ENCODE measurements at regions of chr7 and their contacts with region 1.

Region 1: DNA sequence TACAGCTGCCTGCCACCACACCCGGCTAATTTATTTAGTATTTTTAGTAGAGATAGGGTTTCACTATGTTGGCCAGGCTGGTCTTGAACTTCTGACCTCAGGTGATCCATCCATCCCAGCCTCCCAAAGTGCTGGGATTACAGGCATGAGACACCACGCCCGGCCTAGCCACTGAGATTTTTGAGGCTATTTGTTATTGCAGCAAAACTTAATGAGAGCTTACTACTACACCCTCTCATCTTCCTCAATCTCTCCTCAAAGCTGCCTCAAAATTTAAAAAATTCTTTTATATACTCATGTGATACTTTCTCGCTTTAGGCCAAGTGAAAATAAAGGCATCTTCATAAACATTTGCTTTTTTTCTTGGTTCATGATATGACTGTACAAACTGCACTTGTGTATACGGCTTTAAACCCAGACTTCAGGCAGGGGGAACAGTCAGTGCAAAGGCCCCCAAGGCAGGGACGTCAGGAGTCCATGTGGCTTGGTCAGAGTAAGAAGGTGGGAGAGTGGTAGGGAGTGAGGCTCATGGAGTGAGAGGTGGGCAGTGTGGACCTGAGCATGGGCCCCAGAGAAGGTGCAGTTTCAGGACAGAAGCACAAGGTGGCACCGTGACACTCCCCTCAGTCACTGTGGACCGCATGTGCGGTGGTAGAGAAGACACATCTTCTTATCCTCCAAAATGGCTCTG is 55.5 kb downstream of the SYPL1 start:
- DNase-seq: peak; percentile 56 to 86 (median 63)
- ATAC-seq: peak; percentile 99
- H3K4me3 ChIP-seq: no peak overlapping the region
- H3K4me3 Mint-ChIP-seq: no peak overlapping the region
- H3K27ac ChIP-seq: no peak overlapping the region
- H3K27ac Mint-ChIP-seq: no peak overlapping the region
- H3K4me1 ChIP-seq: peaks cover 15% of the 10 kb centered on the region
- H3K4me1 Mint-ChIP-seq: peaks cover 22% of the 10 kb centered on the region
- H3K27me3 ChIP-seq: no peaks in the 10 kb centered on the region
- H3K27me3 Mint-ChIP-seq: no peaks in the 10 kb centered on the region
- CTCF ChIP-seq: peak; percentile 86

Region 2: GRCh38 chr7:106071356-106071998 is 14.8 kb after region 1 on chr7:
- CTCF ChIA-PET with region 1: interaction called, 4 read pairs
- POLR2A ChIA-PET with region 1: interaction called, 15 read pairs
- intact Hi-C with region 1: no loop called
- DNase-seq: peak in 13 of 14 experiments; percentile 11 to 83 (median 34)
- ATAC-seq: peak; percentile 95
- H3K4me3 ChIP-seq: peak overlapping the region; percentile 44
- H3K4me3 Mint-ChIP-seq: peak overlapping the region; percentile 54
- H3K27ac ChIP-seq: peak overlapping the region; percentile 79 to 86
- H3K27ac Mint-ChIP-seq: peak overlapping the region; percentile 95
- H3K4me1 ChIP-seq: peaks cover 44% of the 10 kb centered on the region
- H3K4me1 Mint-ChIP-seq: peaks cover 63% of the 10 kb centered on the region
- H3K27me3 ChIP-seq: no peaks in the 10 kb centered on the region
- H3K27me3 Mint-ChIP-seq: no peaks in the 10 kb centered on the region
- CTCF ChIP-seq: no peak

Region 3: DNA sequence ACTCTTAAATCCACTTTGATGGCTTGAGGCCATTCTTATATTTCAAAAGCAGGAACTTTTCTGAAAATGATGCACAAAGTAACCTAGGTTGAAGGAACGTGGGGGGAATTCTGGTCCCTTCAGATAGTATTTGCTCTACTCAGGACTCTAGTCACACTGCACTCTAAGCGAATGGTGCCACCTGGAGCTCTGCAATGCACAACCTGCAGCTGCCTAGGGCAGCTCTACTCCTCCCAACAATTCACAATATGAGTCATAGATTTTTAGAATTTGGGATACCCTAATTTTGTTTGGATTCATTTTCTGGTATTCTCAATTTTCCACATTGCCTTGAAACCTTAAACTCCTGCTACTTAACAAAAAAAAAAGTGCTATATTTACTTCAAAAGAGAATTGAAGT is 38.1 kb after region 1 on chr7:
- CTCF ChIA-PET with region 1: no interaction called
- POLR2A ChIA-PET with region 1: no interaction called
- intact Hi-C with region 1: loop called in 1 of 2 experiments (anchors 2 kb)
- DNase-seq: no peak
- ATAC-seq: no peak
- H3K4me3 ChIP-seq: no peak overlapping the region
- H3K4me3 Mint-ChIP-seq: no peak overlapping the region
- H3K27ac ChIP-seq: no peak overlapping the region
- H3K27ac Mint-ChIP-seq: peak overlapping the region; percentile 20
- H3K4me1 ChIP-seq: no peaks in the 10 kb centered on the region
- H3K4me1 Mint-ChIP-seq: peaks cover 10% of the 10 kb centered on the region
- H3K27me3 ChIP-seq: no peaks in the 10 kb centered on the region
- H3K27me3 Mint-ChIP-seq: no peaks in the 10 kb centered on the region
- CTCF ChIP-seq: no peak

Region 4: GRCh38 chr7:106153891-106154449 is 97.3 kb after region 1 on chr7:
- CTCF ChIA-PET with region 1: interaction called, 52 read pairs
- POLR2A ChIA-PET with region 1: interaction called, 13 read pairs
- intact Hi-C with region 1: loop called (anchors 1 kb)
- DNase-seq: peak; percentile 62 to 85 (median 69)
- ATAC-seq: peak; percentile 98
- H3K4me3 ChIP-seq: no peak overlapping the region
- H3K4me3 Mint-ChIP-seq: no peak overlapping the region
- H3K27ac ChIP-seq: no peak overlapping the region
- H3K27ac Mint-ChIP-seq: no peak overlapping the region
- H3K4me1 ChIP-seq: peaks cover 5% of the 10 kb centered on the region
- H3K4me1 Mint-ChIP-seq: peaks cover 5% of the 10 kb centered on the region
- H3K27me3 ChIP-seq: peaks cover 0 to 6% of the 10 kb centered on the region in 2 experiments
- H3K27me3 Mint-ChIP-seq: peaks cover 28% of the 10 kb centered on the region
- CTCF ChIP-seq: peak; percentile 92

Region 5: GRCh38 chr7:106166655-106167342 is 110.1 kb after region 1 on chr7:
- CTCF ChIA-PET with region 1: no interaction called
- POLR2A ChIA-PET with region 1: no interaction called
- intact Hi-C with region 1: loop called in 1 of 2 experiments (anchors 1 kb)
- DNase-seq: peak in 5 of 14 experiments; percentile 5 to 71 (median 58)
- ATAC-seq: peak; percentile 71
- H3K4me3 ChIP-seq: no peak overlapping the region
- H3K4me3 Mint-ChIP-seq: no peak overlapping the region
- H3K27ac ChIP-seq: no peak overlapping the region
- H3K27ac Mint-ChIP-seq: no peak overlapping the region
- H3K4me1 ChIP-seq: no peaks in the 10 kb centered on the region
- H3K4me1 Mint-ChIP-seq: no peaks in the 10 kb centered on the region
- H3K27me3 ChIP-seq: no peaks in the 10 kb centered on the region
- H3K27me3 Mint-ChIP-seq: peaks cover 4% of the 10 kb centered on the region
- CTCF ChIP-seq: peak; percentile 84

Region 6: GRCh38 chr7:106461993-106462859 is 405.6 kb after region 1 on chr7:
- CTCF ChIA-PET with region 1: no interaction called
- POLR2A ChIA-PET with region 1: no interaction called
- intact Hi-C with region 1: loop called in 1 of 2 experiments (anchors 10 kb)
- DNase-seq: peak in 3 of 14 experiments; percentile 28 to 51 (median 43)
- ATAC-seq: no peak
- H3K4me3 ChIP-seq: no peak overlapping the region
- H3K4me3 Mint-ChIP-seq: no peak overlapping the region
- H3K27ac ChIP-seq: no peak overlapping the region
- H3K27ac Mint-ChIP-seq: no peak overlapping the region
- H3K4me1 ChIP-seq: no peaks in the 10 kb centered on the region
- H3K4me1 Mint-ChIP-seq: no peaks in the 10 kb centered on the region
- H3K27me3 ChIP-seq: no peaks in the 10 kb centered on the region
- H3K27me3 Mint-ChIP-seq: no peaks in the 10 kb centered on the region
- CTCF ChIP-seq: peak; percentile 62

Measured in CD4-positive, alpha-beta T cell (primary cell).